ENCODE measurements at regions of chrX and their contacts with region 1.

Region 1: GRCh38 chrX:5823903-5824302 is 404.8 kb downstream of the NLGN4X start:
- DNase-seq: no peak

Region 2: DNA sequence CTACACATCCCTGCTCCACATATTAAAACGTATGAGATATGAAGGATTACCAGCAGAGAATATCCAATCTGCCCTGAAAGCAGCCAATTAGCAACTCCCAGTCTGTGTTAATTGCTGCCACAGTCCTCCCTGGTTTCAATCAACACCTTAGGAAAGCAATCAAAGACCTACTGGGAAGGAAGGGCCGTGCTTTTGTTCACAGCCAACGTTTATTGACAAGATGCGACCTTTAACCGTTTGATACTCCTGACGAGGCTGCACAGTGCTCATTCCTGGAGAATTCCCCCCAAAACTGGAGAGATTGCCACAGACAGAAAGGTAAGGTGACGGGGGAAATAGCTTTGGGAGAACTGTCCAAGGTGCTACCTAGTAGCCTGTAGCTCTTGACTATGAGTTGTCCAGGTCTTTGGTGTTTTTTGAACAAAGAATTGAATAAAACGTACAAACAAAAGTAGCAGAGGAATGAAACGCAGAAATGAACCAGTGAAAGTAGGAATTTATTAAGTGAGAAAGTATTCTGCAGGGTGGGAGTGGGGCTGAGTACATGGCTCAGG is 191.8 kb before region 1 on chrX:
- intact Hi-C with region 1: loop called in 1 of 2 experiments (anchors 5 kb)
- DNase-seq: no peak

Region 3: GRCh38 chrX:5718651-5719050 is 105.3 kb before region 1 on chrX:
- intact Hi-C with region 1: no loop called
- DNase-seq: no peak